IMR-90 (cell line): ENCODE measurements at regions of chr13 and their contacts with region 1.

Region 1: DNA sequence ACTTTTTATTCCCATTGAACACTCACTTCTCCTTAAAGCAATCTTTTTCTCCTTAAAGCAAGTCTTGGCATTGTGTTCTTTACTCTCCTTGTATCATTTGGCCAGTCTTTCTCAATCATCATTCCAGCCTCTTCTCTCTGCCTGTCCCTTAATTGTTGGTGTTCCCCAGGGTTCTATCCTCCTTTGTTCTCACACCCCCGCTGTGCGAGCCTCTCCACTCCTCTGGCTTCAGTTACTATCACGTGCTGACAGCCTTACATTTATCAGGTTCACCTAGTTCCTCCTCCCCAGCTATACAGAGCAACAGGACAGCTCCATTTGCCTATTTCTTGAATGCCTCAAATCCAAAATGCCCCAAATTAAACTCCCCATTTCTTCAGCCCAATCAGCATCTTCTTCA is 24.6 kb downstream of the CYSLTR2 start:
- DNase-seq: no peak
- ATAC-seq: no peak
- H3K4me3 ChIP-seq: no peak overlapping the region
- H3K27ac ChIP-seq: no peak overlapping the region
- H3K4me1 ChIP-seq: no peaks in the 10 kb centered on the region
- H3K27me3 ChIP-seq: peaks cover 21% of the 10 kb centered on the region
- CTCF ChIP-seq: no peak
- POLR2A ChIP-seq: no peak
- RAD21 ChIP-seq: no peak

Region 2: DNA sequence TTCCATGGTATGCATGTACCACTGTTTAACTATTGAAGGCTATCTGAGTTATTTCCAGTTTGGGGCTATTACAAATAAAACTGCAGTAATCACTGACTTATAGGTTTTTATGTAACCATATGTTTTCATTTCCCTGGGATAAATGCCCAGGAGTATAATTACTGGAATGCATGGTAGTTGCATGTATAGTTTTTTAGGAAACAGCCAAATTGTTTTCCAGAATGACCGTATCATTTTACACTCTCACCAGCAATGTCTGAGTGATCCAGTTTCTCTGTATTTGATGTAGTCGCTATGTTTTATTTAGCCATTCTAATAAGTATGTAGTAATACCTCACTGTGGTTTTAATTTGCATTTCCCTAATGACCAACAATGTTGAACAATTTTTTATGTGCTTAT is 17.5 kb after region 1 on chr13:
- CTCF ChIA-PET with region 1: no interaction called
- POLR2A ChIA-PET with region 1: no interaction called
- dilution Hi-C with region 1: no loop called
- in situ Hi-C with region 1: no loop called
- intact Hi-C with region 1: no loop called
- DNase-seq: no peak
- ATAC-seq: no peak
- H3K4me3 ChIP-seq: no peak overlapping the region
- H3K27ac ChIP-seq: no peak overlapping the region
- H3K4me1 ChIP-seq: no peaks in the 10 kb centered on the region
- H3K27me3 ChIP-seq: no peaks in the 10 kb centered on the region
- CTCF ChIP-seq: no peak
- POLR2A ChIP-seq: no peak
- RAD21 ChIP-seq: no peak

Region 3: DNA sequence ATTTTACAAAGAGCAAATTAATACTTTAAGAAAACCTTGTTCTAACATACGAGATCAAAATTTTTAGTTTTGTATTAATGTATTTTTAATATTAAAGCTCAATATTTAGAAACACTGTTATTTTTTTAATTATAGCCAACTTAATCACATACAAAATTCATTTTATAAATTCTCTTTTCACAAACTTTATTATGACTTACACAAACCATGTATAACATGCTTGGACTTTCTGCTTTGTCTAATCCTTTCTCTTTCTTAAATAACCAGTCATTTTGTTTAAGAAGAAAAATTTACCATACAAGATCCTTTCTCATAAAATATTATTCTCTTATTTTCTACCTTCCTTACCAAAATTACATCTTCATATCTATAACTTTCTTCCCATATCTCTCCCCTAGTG is 37.7 kb after region 1 on chr13:
- CTCF ChIA-PET with region 1: no interaction called
- POLR2A ChIA-PET with region 1: no interaction called
- dilution Hi-C with region 1: no loop called
- in situ Hi-C with region 1: no loop called
- intact Hi-C with region 1: loop called (anchors 1 kb)
- DNase-seq: no peak
- ATAC-seq: no peak
- H3K4me3 ChIP-seq: no peak overlapping the region
- H3K27ac ChIP-seq: no peak overlapping the region
- H3K4me1 ChIP-seq: no peaks in the 10 kb centered on the region
- H3K27me3 ChIP-seq: no peaks in the 10 kb centered on the region
- CTCF ChIP-seq: no peak
- POLR2A ChIP-seq: no peak
- RAD21 ChIP-seq: no peak